ENCODE measurements at regions of chr16 and their contacts with region 1.

Region 1: GRCh38 chr16:72400257-72400882 is 228.4 kb upstream of the PMFBP1 start:
- DNase-seq: no peak
- H3K4me3 ChIP-seq: no peak overlapping the region
- CTCF ChIP-seq: peak; percentile 61

Region 2: GRCh38 chr16:72367851-72368250 is 32.5 kb before region 1 on chr16:
- CTCF ChIA-PET with region 1: interaction called, 11 read pairs
- POLR2A ChIA-PET with region 1: no interaction called
- DNase-seq: no peak
- H3K4me3 ChIP-seq: no peak overlapping the region
- CTCF ChIP-seq: no peak

Region 3: DNA sequence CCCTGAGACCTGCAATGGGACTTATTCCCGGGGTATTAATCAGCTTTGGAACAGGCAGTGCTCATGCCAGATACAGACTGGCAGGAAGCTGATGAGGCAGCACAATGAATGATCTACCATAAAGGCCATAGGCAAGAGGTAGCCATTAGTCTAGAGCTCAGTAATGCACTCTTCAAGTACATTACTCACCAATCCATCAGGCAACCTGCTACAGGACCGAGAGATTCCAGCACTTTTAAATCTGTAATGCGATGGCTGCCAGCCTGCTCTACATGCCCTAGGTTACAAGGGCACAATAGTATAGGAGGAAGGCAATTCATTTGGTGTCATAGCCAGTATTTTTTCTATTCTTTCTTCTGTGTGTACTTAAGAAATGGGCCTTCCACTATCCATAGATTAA is 10.6 kb before region 1 on chr16:
- CTCF ChIA-PET with region 1: interaction called, 36 read pairs
- POLR2A ChIA-PET with region 1: no interaction called
- DNase-seq: no peak
- H3K4me3 ChIP-seq: no peak overlapping the region
- CTCF ChIP-seq: no peak

Region 4: DNA sequence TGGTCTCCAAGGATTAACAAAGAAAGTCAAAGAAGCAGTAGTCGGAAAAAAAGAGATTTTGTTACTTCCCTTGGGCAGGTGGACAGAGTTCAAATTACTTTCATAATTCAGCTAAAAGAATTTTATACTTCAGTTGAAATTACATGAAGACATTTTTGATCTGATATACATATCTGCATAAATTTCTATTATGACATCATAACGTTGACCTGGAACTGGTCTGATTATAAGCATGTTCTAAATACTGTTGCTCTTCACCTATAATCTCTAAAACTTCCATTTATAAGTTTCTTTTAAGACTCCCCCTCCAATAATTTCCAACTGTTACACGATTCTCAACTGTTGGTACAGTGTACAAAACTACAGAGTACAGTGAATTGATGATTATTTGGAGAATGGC is 30.0 kb after region 1 on chr16:
- CTCF ChIA-PET with region 1: interaction called, 10 read pairs
- POLR2A ChIA-PET with region 1: no interaction called
- DNase-seq: no peak
- H3K4me3 ChIP-seq: no peak overlapping the region
- CTCF ChIP-seq: no peak

Region 5: GRCh38 chr16:72517154-72517553 is 116.8 kb after region 1 on chr16:
- CTCF ChIA-PET with region 1: no interaction called
- POLR2A ChIA-PET with region 1: no interaction called
- DNase-seq: no peak
- H3K4me3 ChIP-seq: no peak overlapping the region
- CTCF ChIP-seq: no peak

Region 6: GRCh38 chr16:72637306-72637705 is 236.9 kb after region 1 on chr16:
- CTCF ChIA-PET with region 1: no interaction called
- POLR2A ChIA-PET with region 1: no interaction called
- DNase-seq: peak; percentile 17
- H3K4me3 ChIP-seq: no peak overlapping the region
- CTCF ChIP-seq: no peak

Measured in AG04449 (cell line).